CD8-positive, alpha-beta T cell (primary cell): ENCODE measurements at regions of chr20 and their contacts with region 1.

Region 1: GRCh38 chr20:2752567-2753460 is 47.6 kb downstream of the CPXM1 start:
- DNase-seq: peak in 8 of 9 experiments; percentile 18 to 76 (median 58)
- ATAC-seq: peak; percentile 35
- H3K4me3 ChIP-seq: peak overlapping the region; percentile 53 to 57
- H3K4me3 Mint-ChIP-seq: peak overlapping the region; percentile 85
- H3K27ac ChIP-seq: no peak overlapping the region
- H3K27ac Mint-ChIP-seq: no peak overlapping the region
- H3K4me1 ChIP-seq: peaks cover 26% of the 10 kb centered on the region
- H3K4me1 Mint-ChIP-seq: peaks cover 34% of the 10 kb centered on the region
- H3K27me3 ChIP-seq: no peaks in the 10 kb centered on the region
- H3K27me3 Mint-ChIP-seq: peaks cover 12% of the 10 kb centered on the region
- CTCF ChIP-seq: peak; percentile 78

Region 2: GRCh38 chr20:2374346-2375125 is 378.3 kb before region 1 on chr20:
- CTCF ChIA-PET with region 1: no interaction called
- POLR2A ChIA-PET with region 1: no interaction called
- intact Hi-C with region 1: no loop called
- DNase-seq: no peak
- ATAC-seq: no peak
- H3K4me3 ChIP-seq: no peak overlapping the region
- H3K4me3 Mint-ChIP-seq: no peak overlapping the region
- H3K27ac ChIP-seq: no peak overlapping the region
- H3K27ac Mint-ChIP-seq: no peak overlapping the region
- H3K4me1 ChIP-seq: peaks cover 11% of the 10 kb centered on the region
- H3K4me1 Mint-ChIP-seq: peaks cover 12% of the 10 kb centered on the region
- H3K27me3 ChIP-seq: peaks cover 2% of the 10 kb centered on the region in 2 experiments
- H3K27me3 Mint-ChIP-seq: peaks cover 36% of the 10 kb centered on the region
- CTCF ChIP-seq: no peak

Region 3: GRCh38 chr20:2523919-2524708 is 228.7 kb before region 1 on chr20:
- CTCF ChIA-PET with region 1: interaction called, 5 read pairs
- POLR2A ChIA-PET with region 1: no interaction called
- intact Hi-C with region 1: loop called in 1 of 2 experiments (anchors 10 kb)
- DNase-seq: peak; percentile 86 to 97 (median 91)
- ATAC-seq: peak; percentile 84
- H3K4me3 ChIP-seq: peak overlapping the region; percentile 90 to 91
- H3K4me3 Mint-ChIP-seq: peak overlapping the region; percentile 89
- H3K27ac ChIP-seq: peak overlapping the region; percentile 47 to 58
- H3K27ac Mint-ChIP-seq: peak overlapping the region; percentile 60
- H3K4me1 ChIP-seq: peaks cover 10% of the 10 kb centered on the region
- H3K4me1 Mint-ChIP-seq: peaks cover 12% of the 10 kb centered on the region
- H3K27me3 ChIP-seq: no peaks in the 10 kb centered on the region
- H3K27me3 Mint-ChIP-seq: no peaks in the 10 kb centered on the region
- CTCF ChIP-seq: peak; percentile 92

Region 4: GRCh38 chr20:2708073-2708415 is 44.8 kb before region 1 on chr20:
- CTCF ChIA-PET with region 1: interaction called, 449 read pairs
- POLR2A ChIA-PET with region 1: interaction called, 9 read pairs
- intact Hi-C with region 1: loop called (anchors 1 to 2 kb)
- DNase-seq: peak in 1 of 9 experiments; percentile 34
- ATAC-seq: no peak
- H3K4me3 ChIP-seq: no peak overlapping the region
- H3K4me3 Mint-ChIP-seq: no peak overlapping the region
- H3K27ac ChIP-seq: no peak overlapping the region
- H3K27ac Mint-ChIP-seq: no peak overlapping the region
- H3K4me1 ChIP-seq: no peaks in the 10 kb centered on the region
- H3K4me1 Mint-ChIP-seq: no peaks in the 10 kb centered on the region
- H3K27me3 ChIP-seq: no peaks in the 10 kb centered on the region
- H3K27me3 Mint-ChIP-seq: peaks cover 10% of the 10 kb centered on the region
- CTCF ChIP-seq: no peak

Region 5: DNA sequence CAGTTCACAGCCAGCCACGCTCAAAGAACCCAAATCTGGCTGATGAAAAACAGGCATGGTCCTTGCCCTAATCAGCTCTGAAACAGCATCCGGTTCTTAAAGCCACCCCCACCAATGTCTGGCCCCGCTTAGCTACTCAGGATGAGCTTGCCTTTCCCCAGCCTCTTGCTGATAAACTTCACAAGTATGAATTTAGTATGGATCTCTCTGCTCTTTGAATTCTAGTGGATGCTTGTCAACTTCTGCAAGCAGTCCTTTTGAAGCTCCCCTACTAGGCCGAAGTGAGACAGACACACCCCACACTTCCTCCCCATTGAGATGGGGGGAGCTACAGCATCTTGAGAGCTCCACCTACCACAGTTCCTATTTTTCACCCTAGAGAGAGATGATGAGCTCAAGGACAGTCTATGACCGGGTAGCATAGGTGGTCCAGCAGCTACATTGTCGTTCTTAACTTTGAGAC is 23.5 kb before region 1 on chr20:
- CTCF ChIA-PET with region 1: interaction called, 15 read pairs
- POLR2A ChIA-PET with region 1: interaction called, 3 read pairs
- intact Hi-C with region 1: no loop called
- DNase-seq: peak in 7 of 9 experiments; percentile 30 to 80 (median 57)
- ATAC-seq: peak; percentile 96
- H3K4me3 ChIP-seq: peak overlapping the region in 1 of 2 experiments; percentile 41
- H3K4me3 Mint-ChIP-seq: peak overlapping the region; percentile 49
- H3K27ac ChIP-seq: peak overlapping the region; percentile 46 to 75
- H3K27ac Mint-ChIP-seq: peak overlapping the region; percentile 88
- H3K4me1 ChIP-seq: peaks cover 28% of the 10 kb centered on the region
- H3K4me1 Mint-ChIP-seq: peaks cover 27% of the 10 kb centered on the region
- H3K27me3 ChIP-seq: no peaks in the 10 kb centered on the region
- H3K27me3 Mint-ChIP-seq: peaks cover 2% of the 10 kb centered on the region
- CTCF ChIP-seq: no peak

Region 6: DNA sequence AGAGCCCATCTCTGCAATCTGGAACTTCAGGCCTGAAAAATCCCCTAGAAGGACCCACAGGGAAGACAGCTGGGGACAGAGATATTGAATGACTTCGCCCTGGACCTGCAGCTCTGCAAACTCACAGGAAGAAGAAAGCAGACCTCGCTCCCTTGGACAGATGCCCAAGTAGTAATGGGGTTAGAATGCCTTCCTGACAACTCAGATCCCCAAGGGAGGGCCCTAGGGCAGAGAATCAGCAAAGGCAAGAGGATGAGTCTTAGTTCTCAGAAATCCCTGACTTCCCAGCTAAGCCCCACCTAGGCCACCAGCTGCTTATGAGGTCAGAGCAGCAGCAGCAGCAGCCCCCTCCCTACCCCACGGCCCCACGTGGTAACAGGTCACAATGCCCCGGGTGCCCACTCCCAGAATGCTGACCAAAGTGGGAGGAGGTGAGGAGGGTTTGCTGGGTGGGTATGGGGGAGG is 61.8 kb after region 1 on chr20 and contains the start of gene C20orf141:
- CTCF ChIA-PET with region 1: no interaction called
- POLR2A ChIA-PET with region 1: no interaction called
- intact Hi-C with region 1: no loop called
- DNase-seq: no peak
- ATAC-seq: no peak
- H3K4me3 ChIP-seq: no peak within 1 kb of the TSS
- H3K4me3 Mint-ChIP-seq: no peak within 1 kb of the TSS
- H3K27ac ChIP-seq: no peak within 1 kb of the TSS
- H3K27ac Mint-ChIP-seq: no peak within 1 kb of the TSS
- H3K4me1 ChIP-seq: no peaks in the 10 kb centered on the region
- H3K4me1 Mint-ChIP-seq: no peaks in the 10 kb centered on the region
- H3K27me3 ChIP-seq: peaks cover 0 to 2% of the 10 kb centered on the region in 2 experiments
- H3K27me3 Mint-ChIP-seq: peaks cover 7% of the 10 kb centered on the region
- CTCF ChIP-seq: no peak
- total RNA-seq, gene C20orf141: not detected

Region 7: GRCh38 chr20:2840138-2840966 is 87.5 kb after region 1 on chr20 and contains the starts of genes PCED1A and VPS16:
- CTCF ChIA-PET with region 1: interaction called, 4 read pairs
- POLR2A ChIA-PET with region 1: interaction called, 4 read pairs
- intact Hi-C with region 1: loop called (anchors 5 kb)
- DNase-seq: peak; percentile 78 to 95 (median 89)
- ATAC-seq: peak; percentile 92
- H3K4me3 ChIP-seq: peak within 1 kb of the TSS; percentile 88 to 97
- H3K4me3 Mint-ChIP-seq: peak within 1 kb of the TSS; percentile 82
- H3K27ac ChIP-seq: peak within 1 kb of the TSS; percentile 85 to 88
- H3K27ac Mint-ChIP-seq: peak within 1 kb of the TSS; percentile 89
- H3K4me1 ChIP-seq: peaks cover 22% of the 10 kb centered on the region
- H3K4me1 Mint-ChIP-seq: peaks cover 41% of the 10 kb centered on the region
- H3K27me3 ChIP-seq: no peaks in the 10 kb centered on the region
- H3K27me3 Mint-ChIP-seq: no peaks in the 10 kb centered on the region
- CTCF ChIP-seq: no peak
- total RNA-seq, gene PCED1A: 58.7 to 62.2 TPM
- total RNA-seq, gene VPS16: 40.7 to 41.1 TPM